ENCODE measurements at regions of chr12 and their contacts with region 1.

Region 1: GRCh38 chr12:15882118-15882971 is at the start of gene STRAP:
- DNase-seq: peak; percentile 91 to 98 (median 96)
- ATAC-seq: peak; percentile 94
- H3K4me3 ChIP-seq: peak within 1 kb of the TSS; percentile 92
- H3K4me3 Mint-ChIP-seq: peak within 1 kb of the TSS; percentile 97
- H3K27ac ChIP-seq: peak within 1 kb of the TSS; percentile 88 to 98
- H3K27ac Mint-ChIP-seq: peak within 1 kb of the TSS; percentile 100
- H3K4me1 ChIP-seq: peaks cover 20% of the 10 kb centered on the region
- H3K4me1 Mint-ChIP-seq: peaks cover 62% of the 10 kb centered on the region
- H3K27me3 ChIP-seq: no peaks in the 10 kb centered on the region
- H3K27me3 Mint-ChIP-seq: no peaks in the 10 kb centered on the region
- CTCF ChIP-seq: no peak
- total RNA-seq, gene STRAP: 138 to 140 TPM

Region 2: GRCh38 chr12:15789220-15790171 is 92.8 kb before region 1 on chr12 and contains the start of gene EPS8:
- CTCF ChIA-PET with region 1: no interaction called
- POLR2A ChIA-PET with region 1: interaction called, 9 read pairs
- intact Hi-C with region 1: loop called in 1 of 2 experiments (anchors 2 kb)
- DNase-seq: peak; percentile 77 to 94 (median 86)
- ATAC-seq: peak; percentile 92
- H3K4me3 ChIP-seq: peak within 1 kb of the TSS; percentile 69
- H3K4me3 Mint-ChIP-seq: peak within 1 kb of the TSS; percentile 98
- H3K27ac ChIP-seq: no peak within 1 kb of the TSS
- H3K27ac Mint-ChIP-seq: peak within 1 kb of the TSS; percentile 60
- H3K4me1 ChIP-seq: peaks cover 19% of the 10 kb centered on the region
- H3K4me1 Mint-ChIP-seq: peaks cover 15% of the 10 kb centered on the region
- H3K27me3 ChIP-seq: peaks cover 3 to 38% of the 10 kb centered on the region in 2 experiments
- H3K27me3 Mint-ChIP-seq: peaks cover 60% of the 10 kb centered on the region
- CTCF ChIP-seq: no peak
- total RNA-seq, gene EPS8: 0.80 to 1.1 TPM

Region 3: DNA sequence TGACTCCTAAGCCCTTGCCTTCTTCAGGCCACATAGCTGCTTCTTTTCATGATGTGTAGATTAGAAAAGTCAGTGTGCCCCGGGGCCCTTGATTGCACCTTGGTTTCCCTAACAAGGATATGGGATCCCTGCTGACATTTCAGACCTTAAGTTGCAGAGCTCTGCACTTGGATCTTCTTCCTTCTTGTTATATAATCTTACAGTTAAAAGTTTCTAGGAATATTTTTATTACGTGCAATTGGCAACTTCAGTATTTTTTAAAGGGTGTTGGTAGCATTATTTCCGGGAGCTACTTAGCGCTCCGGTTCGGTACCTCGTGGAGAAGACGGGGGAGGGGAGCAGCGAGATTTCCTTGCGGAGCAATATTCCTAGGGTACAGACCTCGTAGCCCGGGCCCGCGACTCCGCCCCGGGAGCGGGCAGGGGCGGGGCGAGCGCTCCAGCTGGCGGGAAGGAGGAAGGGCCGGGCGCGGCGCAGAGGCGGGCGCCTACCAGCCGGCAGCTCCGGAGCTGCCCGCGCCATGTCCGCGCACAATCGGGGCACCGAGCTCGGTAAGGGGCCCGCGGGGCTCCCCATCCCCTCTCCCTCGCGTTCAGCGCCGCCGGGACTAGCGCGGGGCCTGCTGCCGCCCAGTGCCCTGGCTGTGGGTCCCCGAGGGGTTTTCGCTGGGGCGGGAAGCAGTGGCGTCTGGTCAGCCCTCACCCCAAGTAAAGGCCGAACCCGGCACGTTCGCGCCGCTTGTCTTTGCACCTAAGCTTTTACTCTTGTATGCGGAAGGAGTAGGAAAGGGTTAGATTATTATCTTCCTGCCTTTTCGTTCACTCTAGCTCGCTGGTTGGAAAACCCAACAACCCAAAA is 28.7 kb after region 1 on chr12 and contains the start of gene DERA:
- CTCF ChIA-PET with region 1: no interaction called
- POLR2A ChIA-PET with region 1: interaction called, 15 read pairs
- intact Hi-C with region 1: no loop called
- DNase-seq: peak; percentile 16 to 77 (median 51)
- ATAC-seq: peak; percentile 91
- H3K4me3 ChIP-seq: peak within 1 kb of the TSS; percentile 81
- H3K4me3 Mint-ChIP-seq: peak within 1 kb of the TSS; percentile 89
- H3K27ac ChIP-seq: peak within 1 kb of the TSS; percentile 59 to 64
- H3K27ac Mint-ChIP-seq: peak within 1 kb of the TSS; percentile 77
- H3K4me1 ChIP-seq: peaks cover 4% of the 10 kb centered on the region
- H3K4me1 Mint-ChIP-seq: peaks cover 29% of the 10 kb centered on the region
- H3K27me3 ChIP-seq: no peaks in the 10 kb centered on the region
- H3K27me3 Mint-ChIP-seq: no peaks in the 10 kb centered on the region
- CTCF ChIP-seq: no peak
- total RNA-seq, gene DERA: 6.2 to 7.2 TPM

Region 4: DNA sequence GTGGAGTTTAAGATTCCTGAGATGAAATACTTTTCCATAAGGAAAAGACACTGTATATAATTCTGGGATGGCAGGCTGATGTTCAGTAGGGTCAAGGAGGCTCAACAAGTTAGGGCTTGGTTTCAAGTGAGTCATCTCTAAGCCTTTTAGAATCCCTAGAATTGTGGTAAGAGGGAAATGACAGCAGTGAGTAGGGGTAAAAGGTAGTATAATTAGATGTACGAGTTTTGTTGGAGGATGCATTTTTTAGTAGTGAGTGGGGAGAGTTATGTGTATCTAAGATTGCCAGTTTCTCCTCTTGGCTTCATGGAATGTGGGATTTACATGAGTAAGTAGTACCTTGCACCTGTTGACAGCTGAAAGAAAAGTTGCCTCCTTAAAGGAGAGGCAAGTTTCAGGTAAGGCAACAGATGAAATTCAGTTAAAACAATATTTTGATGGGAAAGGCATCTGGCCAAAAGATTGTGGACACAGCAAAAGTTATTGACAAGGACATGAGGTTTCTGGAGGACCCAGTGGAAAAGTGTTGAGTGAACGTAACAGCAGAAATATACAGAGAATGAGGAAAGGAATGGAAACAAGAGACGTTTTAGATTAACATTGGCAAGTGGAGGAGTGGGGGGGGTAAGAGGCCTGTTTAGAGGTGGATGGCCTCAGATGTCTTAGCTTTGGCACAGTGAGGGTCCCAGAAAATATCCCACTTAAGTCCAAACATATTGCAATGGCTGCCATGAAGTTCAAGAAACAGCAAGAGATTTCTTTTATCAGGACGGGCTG is 701.8 kb after region 1 on chr12:
- CTCF ChIA-PET with region 1: no interaction called
- POLR2A ChIA-PET with region 1: no interaction called
- intact Hi-C with region 1: no loop called
- DNase-seq: no peak
- ATAC-seq: no peak
- H3K4me3 ChIP-seq: no peak overlapping the region
- H3K4me3 Mint-ChIP-seq: no peak overlapping the region
- H3K27ac ChIP-seq: no peak overlapping the region
- H3K27ac Mint-ChIP-seq: no peak overlapping the region
- H3K4me1 ChIP-seq: no peaks in the 10 kb centered on the region
- H3K4me1 Mint-ChIP-seq: no peaks in the 10 kb centered on the region
- H3K27me3 ChIP-seq: no peaks in the 10 kb centered on the region
- H3K27me3 Mint-ChIP-seq: no peaks in the 10 kb centered on the region
- CTCF ChIP-seq: no peak